IMR-90 (cell line): ENCODE measurements at regions of chr17 and their contacts with region 1.

Region 1: GRCh38 chr17:12365805-12366204 is 299.9 kb upstream of the MYOCD start:
- DNase-seq: peak; percentile 72
- ATAC-seq: peak; percentile 56
- H3K4me3 ChIP-seq: no peak overlapping the region
- H3K27ac ChIP-seq: no peak overlapping the region
- H3K4me1 ChIP-seq: 0 out of 2 replicates have a peak, but pooled peaks cover 2% of the 10 kb centered on the region
- H3K27me3 ChIP-seq: no peaks in the 10 kb centered on the region
- CTCF ChIP-seq: no peak
- POLR2A ChIP-seq: no peak
- RAD21 ChIP-seq: no peak

Region 2: GRCh38 chr17:12510535-12510934 is 144.7 kb after region 1 on chr17:
- CTCF ChIA-PET with region 1: interaction called, 3 read pairs
- POLR2A ChIA-PET with region 1: interaction called, 10 read pairs
- dilution Hi-C with region 1: no loop called
- in situ Hi-C with region 1: no loop called
- intact Hi-C with region 1: no loop called
- DNase-seq: peak; percentile 75
- ATAC-seq: peak; percentile 72
- H3K4me3 ChIP-seq: no peak overlapping the region
- H3K27ac ChIP-seq: peak overlapping the region; percentile 98
- H3K4me1 ChIP-seq: peaks cover 15% of the 10 kb centered on the region
- H3K27me3 ChIP-seq: no peaks in the 10 kb centered on the region
- CTCF ChIP-seq: no peak
- POLR2A ChIP-seq: no peak
- RAD21 ChIP-seq: no peak